Activated T-helper 1 cell treated with anti-CD3 and anti-CD28 coated beads, Interleukin-12 subunit alpha, Interleukin-12 subunit beta, Interleukin-2, Interleukin-4 antibody, amounts not matched to agents 30 ng/mL and 10 ng/mL and 1 ng/mL, durations not matched to agents 14 hours and 24 hours and 36 hours (primary cell): ENCODE measurements at regions of chr17 and their contacts with region 1.

Region 1: GRCh38 chr17:57995076-57995956 is 7.3 kb upstream of the VEZF1 start:
- DNase-seq: peak; percentile 22
- H3K4me3 Mint-ChIP-seq: no peak overlapping the region
- H3K27ac Mint-ChIP-seq: no peak overlapping the region
- H3K4me1 Mint-ChIP-seq: peaks cover 58% of the 10 kb centered on the region
- H3K27me3 Mint-ChIP-seq: no peaks in the 10 kb centered on the region

Region 2: GRCh38 chr17:57858838-57859237 is 136.5 kb before region 1 on chr17:
- intact Hi-C with region 1: loop called (anchors 1 kb)
- DNase-seq: no peak
- H3K4me3 Mint-ChIP-seq: no peak overlapping the region
- H3K27ac Mint-ChIP-seq: no peak overlapping the region
- H3K4me1 Mint-ChIP-seq: peaks cover 10% of the 10 kb centered on the region
- H3K27me3 Mint-ChIP-seq: peaks cover 30% of the 10 kb centered on the region

Region 3: GRCh38 chr17:57892146-57892828 is 103.0 kb before region 1 on chr17:
- intact Hi-C with region 1: loop called (anchors 1 kb)
- DNase-seq: peak; percentile 68
- H3K4me3 Mint-ChIP-seq: no peak overlapping the region
- H3K27ac Mint-ChIP-seq: no peak overlapping the region
- H3K4me1 Mint-ChIP-seq: no peaks in the 10 kb centered on the region
- H3K27me3 Mint-ChIP-seq: peaks cover 12% of the 10 kb centered on the region

Region 4: GRCh38 chr17:57916925-57917858 is 78.1 kb before region 1 on chr17:
- intact Hi-C with region 1: loop called (anchors 1 kb)
- DNase-seq: no peak
- H3K4me3 Mint-ChIP-seq: no peak overlapping the region
- H3K27ac Mint-ChIP-seq: no peak overlapping the region
- H3K4me1 Mint-ChIP-seq: no peaks in the 10 kb centered on the region
- H3K27me3 Mint-ChIP-seq: peaks cover 11% of the 10 kb centered on the region

Region 5: DNA sequence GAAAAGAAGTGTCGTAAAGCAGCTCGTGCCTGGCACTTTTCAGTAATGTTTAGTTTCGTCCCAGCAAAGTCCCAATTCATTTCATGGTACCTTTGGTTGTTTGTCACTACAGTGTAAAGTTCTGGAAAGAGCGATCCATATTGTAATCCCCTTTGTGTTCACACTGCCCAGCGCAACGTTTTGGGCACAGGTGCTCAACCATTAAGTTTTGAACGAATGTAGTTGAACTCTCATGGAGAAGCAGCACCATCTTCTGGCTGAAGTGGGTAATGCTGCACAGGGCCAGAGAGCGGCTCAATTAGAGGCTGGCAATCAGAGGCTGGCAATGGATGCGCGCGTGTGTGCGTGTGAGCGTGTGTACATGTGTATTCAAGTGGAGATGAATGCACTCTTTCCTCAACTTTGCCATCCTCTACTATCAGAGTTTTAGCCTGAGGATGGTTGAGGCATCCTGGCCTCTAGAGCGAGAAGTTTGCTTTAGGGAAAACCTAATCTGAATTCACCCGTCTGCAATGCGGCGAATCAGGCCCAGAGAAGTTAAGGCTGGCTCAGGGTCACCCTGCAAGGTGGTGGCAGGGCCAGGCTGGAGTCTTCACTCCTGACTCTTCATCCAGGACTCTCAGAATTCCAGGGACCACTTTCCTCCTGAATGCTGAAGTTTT is 117.8 kb after region 1 on chr17:
- intact Hi-C with region 1: loop called (anchors 2 kb)
- DNase-seq: peak; percentile 70
- H3K4me3 Mint-ChIP-seq: no peak overlapping the region
- H3K27ac Mint-ChIP-seq: no peak overlapping the region
- H3K4me1 Mint-ChIP-seq: peaks cover 6% of the 10 kb centered on the region
- H3K27me3 Mint-ChIP-seq: peaks cover 11% of the 10 kb centered on the region

Region 6: DNA sequence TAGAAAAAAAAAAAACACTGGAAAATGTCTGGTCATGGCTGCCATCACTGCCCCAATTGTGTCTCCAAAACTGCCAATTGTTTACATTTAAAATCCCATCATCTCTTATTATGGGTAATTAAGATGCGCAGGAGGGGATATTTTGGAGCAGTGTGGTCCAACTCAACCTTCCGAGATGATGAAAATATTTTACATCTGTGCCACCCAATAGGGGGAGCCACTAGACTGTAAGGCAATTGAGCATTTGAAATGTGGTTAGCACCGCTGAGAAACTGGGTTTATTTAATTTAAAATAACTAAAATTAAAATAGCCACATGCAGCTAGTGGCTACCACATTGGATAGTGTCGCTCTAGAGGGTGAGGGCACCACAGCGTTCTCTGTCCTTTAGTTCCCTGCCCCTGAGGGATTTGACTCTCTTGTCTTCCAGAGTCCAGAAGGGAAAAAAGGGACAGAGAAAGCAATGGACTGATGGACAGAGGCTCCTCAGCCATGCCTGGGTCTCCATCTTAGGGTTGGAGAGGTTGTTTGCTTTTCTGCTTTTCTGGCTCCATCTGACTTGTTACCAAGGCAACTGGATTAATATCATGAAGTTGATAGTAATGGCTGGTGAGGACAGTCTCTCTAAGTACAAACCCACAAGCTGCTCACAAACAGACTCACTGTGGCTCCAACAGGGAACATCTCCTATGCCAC is 281.9 kb after region 1 on chr17:
- intact Hi-C with region 1: no loop called
- DNase-seq: no peak
- H3K4me3 Mint-ChIP-seq: no peak overlapping the region
- H3K27ac Mint-ChIP-seq: no peak overlapping the region
- H3K4me1 Mint-ChIP-seq: peaks cover 4% of the 10 kb centered on the region
- H3K27me3 Mint-ChIP-seq: peaks cover 22% of the 10 kb centered on the region